T47D (cell line): ENCODE measurements at regions of chr16 and their contacts with region 1.

Region 1: GRCh38 chr16:30429678-30430427 is at the start of gene DCTPP1:
- DNase-seq: peak; percentile 95 to 100

Region 2: GRCh38 chr16:30350134-30350871 is 79.5 kb before region 1 on chr16:
- in situ Hi-C with region 1: no loop called
- DNase-seq: no peak

Region 3: DNA sequence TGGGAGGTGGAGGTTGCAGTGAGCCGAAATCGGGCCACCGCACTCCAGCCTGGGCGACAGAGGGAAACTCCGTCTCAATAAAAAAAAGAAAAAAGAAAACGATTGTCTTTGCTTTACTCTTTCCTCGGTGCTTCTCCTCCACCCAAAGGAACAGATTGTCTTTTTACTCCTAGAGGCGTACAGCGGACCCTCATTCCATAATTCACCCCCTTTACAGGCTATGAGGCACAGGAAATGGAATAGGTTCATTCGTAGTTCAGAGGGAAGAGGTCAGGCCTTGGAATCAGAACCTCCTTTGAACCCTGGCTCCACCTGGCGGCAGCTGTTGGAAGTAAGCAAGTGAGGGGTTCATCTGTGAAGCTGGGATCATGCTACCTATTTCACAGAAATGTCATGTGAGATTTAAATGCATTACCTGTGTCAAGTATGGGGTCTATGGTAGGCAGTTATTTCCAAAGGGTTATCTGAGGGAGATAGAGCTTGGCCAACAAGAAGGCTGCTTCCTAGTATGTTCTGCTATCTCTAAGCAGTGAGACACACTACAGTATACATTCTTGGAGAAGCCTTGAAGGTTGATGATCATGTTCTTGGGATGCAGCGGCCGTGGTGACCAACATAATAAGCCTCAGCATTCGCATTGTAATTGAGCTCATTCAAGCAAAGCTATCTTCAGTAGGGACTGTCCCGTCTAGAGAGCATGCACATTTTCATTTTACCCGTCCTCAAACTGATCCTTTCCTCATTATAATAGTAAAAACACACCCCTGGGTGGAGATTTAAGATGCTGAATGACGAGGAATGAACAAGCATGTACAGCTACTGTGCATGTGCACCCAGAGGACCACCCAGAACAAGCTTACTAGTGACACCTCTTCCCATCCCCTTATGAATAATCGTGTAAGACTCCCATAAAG is 199.0 kb after region 1 on chr16:
- in situ Hi-C with region 1: loop called (anchors 25 kb)
- DNase-seq: peak; percentile 48 to 87